Ovary (tissue), 10 donors: ENCODE measurements at regions of chr1 and their contacts with region 1.

Region 1: GRCh38 chr1:19179597-19180264 is 30.3 kb downstream of the UBR4 start:
- DNase-seq: peak in 3 of 5 donors; percentile 23 to 27 (median 24)
- H3K4me3 ChIP-seq: no peak overlapping the region
- H3K27ac ChIP-seq: no peak overlapping the region
- H3K4me1 ChIP-seq: no peaks in the 10 kb centered on the region
- H3K27me3 ChIP-seq: no peaks in the 10 kb centered on the region
- CTCF ChIP-seq: peak in 2 of 3 donors; percentile 15 to 52
- EP300 ChIP-seq: no peak
- POLR2A ChIP-seq: no peak

Region 2: DNA sequence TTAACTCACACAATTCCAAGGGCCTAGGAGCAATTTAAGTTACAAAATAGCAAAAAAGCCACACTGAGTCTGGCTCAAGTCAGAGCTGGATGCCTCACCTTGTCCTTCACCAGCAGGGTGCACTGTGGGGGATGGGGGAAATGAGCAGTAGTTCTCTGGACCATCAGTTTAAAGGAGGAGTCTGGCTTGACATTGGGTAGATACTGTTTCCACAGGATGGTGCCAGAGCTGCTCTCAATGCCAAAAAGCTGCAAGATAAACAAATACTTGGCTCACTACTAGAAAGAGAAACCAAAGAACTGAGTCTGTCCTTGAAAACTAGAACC is 52.8 kb after region 1 on chr1:
- intact Hi-C with region 1: loop called in 1 of 4 experiments (anchors 10 kb)
- DNase-seq: peak; percentile 64 to 78 (median 71)
- H3K4me3 ChIP-seq: no peak overlapping the region
- H3K27ac ChIP-seq: peak overlapping the region in 1 of 2 donors; percentile 66
- H3K4me1 ChIP-seq: peaks cover 19% of the 10 kb centered on the region
- H3K27me3 ChIP-seq: no peaks in the 10 kb centered on the region
- CTCF ChIP-seq: peak in 1 of 3 donors; percentile 36
- EP300 ChIP-seq: no peak
- POLR2A ChIP-seq: no peak

Region 3: GRCh38 chr1:19240673-19241538 is 61.2 kb after region 1 on chr1:
- intact Hi-C with region 1: loop called in 2 of 4 experiments (anchors 2 to 10 kb)
- DNase-seq: peak; percentile 57 to 81 (median 76)
- H3K4me3 ChIP-seq: no peak overlapping the region
- H3K27ac ChIP-seq: peak overlapping the region; percentile 11 to 42
- H3K4me1 ChIP-seq: no peaks in the 10 kb centered on the region
- H3K27me3 ChIP-seq: no peaks in the 10 kb centered on the region
- CTCF ChIP-seq: peak; percentile 74 to 92 (median 88)
- EP300 ChIP-seq: no peak
- POLR2A ChIP-seq: no peak